IMR-90 (cell line): ENCODE measurements at regions of chr1 and their contacts with region 1.

Region 1: GRCh38 chr1:25890239-25891034 is 14.9 kb upstream of the PAQR7 start:
- DNase-seq: peak; percentile 58
- ATAC-seq: no peak
- H3K4me3 ChIP-seq: no peak overlapping the region
- H3K27ac ChIP-seq: peak overlapping the region; percentile 74
- H3K4me1 ChIP-seq: peaks cover 33% of the 10 kb centered on the region
- H3K27me3 ChIP-seq: no peaks in the 10 kb centered on the region
- CTCF ChIP-seq: no peak
- POLR2A ChIP-seq: no peak
- RAD21 ChIP-seq: no peak

Region 2: GRCh38 chr1:25796811-25797458 is 93.5 kb before region 1 on chr1:
- CTCF ChIA-PET with region 1: no interaction called
- POLR2A ChIA-PET with region 1: no interaction called
- dilution Hi-C with region 1: no loop called
- in situ Hi-C with region 1: no loop called
- intact Hi-C with region 1: no loop called
- DNase-seq: peak; percentile 77
- ATAC-seq: peak; percentile 27; the same call in 1 of the 2 replicates
- H3K4me3 ChIP-seq: no peak overlapping the region
- H3K27ac ChIP-seq: no peak overlapping the region
- H3K4me1 ChIP-seq: peaks cover 12% of the 10 kb centered on the region
- H3K27me3 ChIP-seq: no peaks in the 10 kb centered on the region
- CTCF ChIP-seq: peak; percentile 92
- POLR2A ChIP-seq: no peak
- RAD21 ChIP-seq: peak; percentile 90

Region 3: DNA sequence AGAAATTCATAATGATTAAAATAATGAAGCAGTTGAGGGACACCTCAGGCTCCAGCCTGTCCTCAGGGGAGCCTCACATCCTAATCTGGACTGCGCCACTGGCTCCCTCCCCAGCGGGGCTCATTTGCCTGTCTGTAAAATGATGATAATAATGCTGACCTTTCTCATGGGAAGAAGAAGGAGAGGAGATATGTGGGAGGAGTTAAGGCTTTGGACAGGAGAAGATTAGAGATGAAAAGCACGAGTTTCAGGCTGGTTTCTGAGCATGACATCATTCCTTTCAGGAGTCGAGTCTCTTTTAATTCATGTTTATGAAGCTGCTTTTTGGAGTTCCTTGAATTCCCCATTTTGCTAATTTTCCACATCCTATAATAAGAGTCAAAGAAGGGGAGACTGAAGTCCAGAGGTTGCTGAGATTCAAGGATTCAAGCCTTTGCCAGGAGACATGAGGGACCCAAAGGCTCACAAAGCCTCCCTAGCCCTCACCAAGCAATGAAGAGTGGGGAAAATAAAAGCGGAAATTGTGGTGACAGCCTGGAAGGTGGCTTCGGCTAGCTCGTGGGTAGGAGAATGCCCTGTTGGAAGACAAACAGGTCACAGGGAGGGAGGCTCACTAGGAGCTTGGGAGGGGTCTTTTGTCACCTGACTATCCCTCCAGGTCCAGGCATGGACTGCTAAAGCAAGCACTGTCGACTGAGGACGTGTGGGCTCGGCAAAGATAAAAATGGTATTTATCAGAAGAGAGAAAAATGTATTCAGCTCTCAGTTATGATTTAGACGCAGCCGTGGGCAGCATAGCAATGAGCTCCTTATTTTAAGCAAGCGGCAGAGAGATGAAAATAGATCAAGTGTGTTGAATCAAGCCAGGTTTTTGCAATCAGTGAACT is 43.3 kb after region 1 on chr1:
- CTCF ChIA-PET with region 1: no interaction called
- POLR2A ChIA-PET with region 1: no interaction called
- dilution Hi-C with region 1: no loop called
- in situ Hi-C with region 1: no loop called
- intact Hi-C with region 1: no loop called
- DNase-seq: no peak
- ATAC-seq: no peak; the same call in 1 of the 2 replicates
- H3K4me3 ChIP-seq: no peak overlapping the region
- H3K27ac ChIP-seq: no peak overlapping the region
- H3K4me1 ChIP-seq: no peaks in the 10 kb centered on the region
- H3K27me3 ChIP-seq: peaks cover 10% of the 10 kb centered on the region; the same call in 1 of the 2 replicates
- CTCF ChIP-seq: no peak
- POLR2A ChIP-seq: no peak
- RAD21 ChIP-seq: no peak

Region 4: DNA sequence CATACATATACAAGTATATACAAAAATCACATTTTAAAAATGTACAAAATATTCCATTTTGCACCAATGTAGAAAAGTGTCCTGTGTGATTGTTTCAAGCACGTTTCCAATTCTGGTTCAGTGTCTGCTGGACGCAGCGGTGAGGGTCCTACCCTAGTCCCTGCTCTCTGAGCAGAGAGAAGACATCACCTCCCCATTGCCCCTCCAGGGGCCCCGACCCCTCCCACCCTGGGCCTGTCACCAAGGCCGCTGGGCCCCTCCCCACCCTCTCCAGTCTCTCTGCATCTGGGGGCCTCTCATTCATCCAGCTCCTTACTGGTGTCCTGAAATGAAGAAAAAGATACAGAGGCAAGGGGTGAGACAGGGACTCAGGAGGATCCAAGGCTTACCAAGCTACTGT is 161.1 kb after region 1 on chr1:
- CTCF ChIA-PET with region 1: no interaction called
- POLR2A ChIA-PET with region 1: interaction called, 13 read pairs
- dilution Hi-C with region 1: no loop called
- in situ Hi-C with region 1: no loop called
- intact Hi-C with region 1: no loop called
- DNase-seq: no peak
- ATAC-seq: no peak
- H3K4me3 ChIP-seq: no peak overlapping the region
- H3K27ac ChIP-seq: no peak overlapping the region
- H3K4me1 ChIP-seq: no peaks in the 10 kb centered on the region
- H3K27me3 ChIP-seq: peaks cover 80% of the 10 kb centered on the region
- CTCF ChIP-seq: no peak
- POLR2A ChIP-seq: no peak
- RAD21 ChIP-seq: no peak